Ovary (tissue), 10 donors: ENCODE measurements at regions of chr1 and their contacts with region 1.

Region 1: DNA sequence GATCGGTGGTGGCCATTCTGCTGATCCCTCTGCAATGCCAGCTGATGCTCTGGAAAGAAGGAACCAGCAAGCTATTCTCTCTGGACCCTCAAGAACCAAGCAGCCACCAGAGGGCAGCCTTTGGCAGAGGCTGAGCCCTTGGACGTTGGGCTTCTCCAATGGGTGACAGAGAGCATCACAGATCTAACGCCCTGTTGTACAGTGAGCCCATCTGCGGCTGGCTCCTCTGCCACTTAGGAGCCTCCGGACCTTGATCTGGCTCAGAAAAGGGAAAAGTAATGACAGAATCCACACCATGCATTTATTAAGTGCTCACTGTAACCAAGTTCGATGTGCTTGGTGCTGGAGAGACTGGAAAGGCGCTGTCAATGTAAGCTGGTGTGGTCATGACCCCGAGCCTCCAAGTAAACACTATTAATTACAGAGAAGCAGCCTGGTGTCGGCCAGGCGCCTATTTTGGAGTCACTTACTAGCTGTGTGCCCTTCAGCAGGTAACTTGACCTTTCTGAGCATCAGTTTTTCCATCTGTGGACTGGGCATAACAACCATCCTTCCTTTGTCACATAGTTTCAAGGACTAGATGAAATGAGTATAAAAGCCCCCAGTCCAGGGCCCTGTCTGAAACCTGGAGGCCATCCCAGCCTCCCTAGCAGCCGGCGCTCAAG is 34.9 kb downstream of the ECE1 start:
- DNase-seq: peak; percentile 87 to 94 (median 93)
- H3K4me3 ChIP-seq: no peak overlapping the region
- H3K27ac ChIP-seq: peak overlapping the region; percentile 30 to 51
- H3K4me1 ChIP-seq: peaks cover 7% of the 10 kb centered on the region
- H3K27me3 ChIP-seq: no peaks in the 10 kb centered on the region
- CTCF ChIP-seq: peak; percentile 70 to 94 (median 86)
- EP300 ChIP-seq: no peak
- POLR2A ChIP-seq: no peak

Region 2: DNA sequence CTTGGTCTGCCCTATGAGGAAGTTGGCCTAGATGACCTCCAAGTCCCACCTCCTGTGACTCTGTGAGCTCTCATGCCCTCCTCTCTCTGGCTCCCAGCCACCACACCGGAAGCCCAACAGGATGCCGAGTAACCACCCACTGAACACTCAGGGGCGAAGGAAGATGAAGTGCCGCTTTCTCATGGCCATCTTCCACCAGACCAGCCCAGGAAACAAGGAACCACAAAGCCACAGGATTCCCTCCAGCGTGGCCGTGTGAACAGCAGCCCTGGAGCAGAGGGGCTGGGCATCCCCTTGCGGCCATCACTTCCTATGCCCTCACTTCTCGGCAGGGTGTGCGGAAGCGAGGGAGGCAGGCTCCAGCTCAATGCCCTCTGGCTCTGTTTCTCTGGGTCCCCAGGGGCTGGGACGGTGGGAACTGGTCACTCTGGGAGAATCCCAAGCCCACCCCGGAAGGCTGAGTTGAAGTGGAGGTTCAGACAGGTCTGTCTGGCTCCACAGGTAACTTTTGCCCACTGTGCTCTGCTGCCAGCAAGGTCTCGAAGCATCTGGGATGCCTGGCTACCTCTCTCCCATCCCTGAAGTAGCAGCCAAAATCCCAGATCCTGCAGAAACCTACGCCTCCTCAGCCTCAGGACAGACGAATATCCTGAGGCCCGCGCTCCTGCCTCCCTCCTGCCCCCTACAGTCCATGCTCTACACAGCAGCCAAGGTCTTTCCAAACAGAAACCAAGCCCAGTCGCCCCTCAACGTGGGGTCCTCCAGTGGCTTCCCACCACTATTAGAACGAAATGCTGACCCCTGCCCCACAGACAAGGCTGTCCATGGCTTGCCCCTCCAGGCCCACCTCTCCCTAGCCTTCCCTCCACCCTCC is 79.0 kb after region 1 on chr1:
- intact Hi-C with region 1: loop called in 2 of 4 experiments (anchors 2 to 5 kb)
- DNase-seq: peak; percentile 68 to 83 (median 79)
- H3K4me3 ChIP-seq: peak overlapping the region; percentile 41
- H3K27ac ChIP-seq: peak overlapping the region; percentile 81 to 92
- H3K4me1 ChIP-seq: peaks cover 56% of the 10 kb centered on the region
- H3K27me3 ChIP-seq: no peaks in the 10 kb centered on the region
- CTCF ChIP-seq: peak; percentile 82 to 87 (median 82)
- EP300 ChIP-seq: no peak
- POLR2A ChIP-seq: no peak

Region 3: GRCh38 chr1:21344750-21345443 is 89.5 kb after region 1 on chr1:
- intact Hi-C with region 1: loop called in 1 of 4 experiments (anchors 5 kb)
- DNase-seq: peak in 3 of 5 donors; percentile 58 to 68 (median 64)
- H3K4me3 ChIP-seq: peak overlapping the region; percentile 64
- H3K27ac ChIP-seq: peak overlapping the region; percentile 81 to 92
- H3K4me1 ChIP-seq: peaks cover 17% of the 10 kb centered on the region
- H3K27me3 ChIP-seq: no peaks in the 10 kb centered on the region
- CTCF ChIP-seq: no peak
- EP300 ChIP-seq: no peak
- POLR2A ChIP-seq: no peak